Dorsolateral prefrontal cortex (tissue), 120 donors: ENCODE measurements at regions of chr7 and their contacts with region 1.

Region 1: GRCh38 chr7:120554960-120555571 is 282.1 kb downstream of the KCND2 start:
- DNase-seq: peak in 4 of 10 donors; percentile 15 to 61 (median 42)
- H3K4me3 ChIP-seq: no peak overlapping the region
- H3K27ac ChIP-seq: no peak overlapping the region
- H3K27me3 ChIP-seq: peaks cover 0 to 6% (median 0%) of the 10 kb centered on the region in 45 donors
- CTCF ChIP-seq: peak; percentile 46 to 82 (median 64)

Region 2: DNA sequence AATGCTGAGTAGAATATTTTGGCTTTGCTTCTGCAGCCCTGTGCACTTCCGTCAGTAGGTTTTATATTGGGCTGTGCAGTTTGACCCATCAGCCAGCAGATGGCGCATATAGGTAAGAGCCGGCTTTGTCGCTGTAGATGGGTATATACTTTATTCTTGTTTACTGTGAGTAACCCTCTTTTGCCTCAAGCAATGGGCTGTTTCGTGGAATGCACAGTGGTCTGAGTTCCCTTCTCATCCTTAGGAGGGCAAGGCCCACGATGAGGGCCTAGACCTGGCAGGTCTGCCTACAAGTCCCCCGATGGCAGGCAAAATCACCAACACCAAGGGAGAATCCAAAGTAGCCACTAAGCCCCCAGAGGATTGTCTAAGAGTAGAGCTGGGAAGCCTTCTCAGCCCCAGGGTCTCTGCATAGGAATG is 1285.0 kb before region 1 on chr7:
- intact Hi-C with region 1: loop called in 1 of 2 experiments (anchors 5 kb)
- DNase-seq: peak in 8 of 10 donors; percentile 29 to 73 (median 55)
- H3K4me3 ChIP-seq: no peak overlapping the region
- H3K27ac ChIP-seq: no peak overlapping the region
- H3K27me3 ChIP-seq: peaks cover 0 to 3% (median 0%) of the 10 kb centered on the region in 45 donors
- CTCF ChIP-seq: peak; percentile 57 to 90 (median 80)

Region 3: DNA sequence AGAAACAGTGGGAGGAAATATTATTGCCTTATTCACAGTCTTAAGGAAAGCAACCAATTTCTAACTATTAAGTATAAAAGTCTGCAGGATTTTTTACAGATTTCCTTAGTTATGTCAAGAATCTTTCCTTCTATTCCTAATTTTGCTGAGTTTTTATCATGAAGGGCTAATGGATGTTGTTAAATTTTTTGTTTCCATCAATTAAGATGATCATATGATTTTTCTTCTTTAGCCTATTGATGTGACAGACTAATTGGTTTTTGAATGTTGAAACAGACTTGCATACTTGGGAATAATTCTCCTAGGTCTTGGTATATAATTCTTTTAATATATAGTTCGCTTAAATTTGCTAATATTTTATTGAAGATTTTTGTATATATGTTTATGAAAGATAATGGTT is 851.2 kb before region 1 on chr7:
- intact Hi-C with region 1: no loop called
- DNase-seq: no peak
- H3K4me3 ChIP-seq: no peak overlapping the region
- H3K27ac ChIP-seq: no peak overlapping the region
- H3K27me3 ChIP-seq: no peaks in the 10 kb centered on the region
- CTCF ChIP-seq: no peak

Region 4: DNA sequence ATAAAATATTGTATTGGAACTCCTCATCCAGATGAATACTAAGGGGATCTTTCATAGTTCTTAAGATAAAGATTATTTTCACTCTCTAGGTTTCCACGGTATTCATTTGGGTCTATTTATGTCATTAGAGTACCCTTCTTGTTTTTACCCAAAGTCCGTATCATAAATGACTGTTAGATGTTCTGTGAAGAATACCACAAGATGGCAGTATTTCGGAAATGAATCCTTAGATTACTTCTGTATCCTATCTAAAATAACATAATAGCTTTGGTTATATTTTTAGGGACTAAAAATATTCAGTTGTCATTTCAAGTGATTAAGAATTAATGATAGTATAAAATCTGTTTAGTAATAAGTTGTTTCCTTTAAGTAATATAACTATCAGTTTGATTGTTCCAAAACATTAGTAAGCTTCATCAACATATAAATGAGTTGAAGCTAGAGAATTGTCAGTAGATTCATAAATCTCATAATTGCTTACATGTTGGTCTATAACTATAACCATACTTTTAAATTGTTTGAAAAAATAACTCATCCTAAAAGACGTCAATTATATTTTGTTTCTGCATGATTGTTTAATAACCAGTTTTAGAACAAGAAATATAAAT is 619.5 kb before region 1 on chr7:
- intact Hi-C with region 1: loop called in 1 of 2 experiments (anchors 10 kb)
- DNase-seq: no peak
- H3K4me3 ChIP-seq: no peak overlapping the region
- H3K27ac ChIP-seq: no peak overlapping the region
- H3K27me3 ChIP-seq: no peaks in the 10 kb centered on the region
- CTCF ChIP-seq: peak; percentile 28 to 76 (median 60)

Region 5: GRCh38 chr7:120272261-120272660 is 282.8 kb before region 1 on chr7:
- intact Hi-C with region 1: loop called (anchors 5 to 10 kb)
- DNase-seq: peak in 2 of 10 donors; percentile 37 to 66
- H3K4me3 ChIP-seq: peak overlapping the region; percentile 36 to 78 (median 64)
- H3K27ac ChIP-seq: peak overlapping the region in 54 of 59 donors; percentile 24 to 91 (median 78)
- H3K27me3 ChIP-seq: peaks cover 0 to 17% (median 0%) of the 10 kb centered on the region in 45 donors
- CTCF ChIP-seq: peak; percentile 39 to 77 (median 68)